ENCODE measurements at regions of chr1 and their contacts with region 1.

Region 1: GRCh38 chr1:161071886-161072371 is 2.2 kb upstream of the ARHGAP30 start:
- DNase-seq: peak; percentile 29
- ATAC-seq: peak; percentile 66
- H3K4me3 ChIP-seq: no peak overlapping the region
- H3K27ac ChIP-seq: no peak overlapping the region
- H3K4me1 ChIP-seq: peaks cover 0 to 46% of the 10 kb centered on the region in 2 experiments; a peak in 2 of 4 replicates
- H3K27me3 ChIP-seq: no peaks in the 10 kb centered on the region
- CTCF ChIP-seq: peak; percentile 57 to 88 (median 70)
- POLR2A ChIP-seq: no peak
- RAD21 ChIP-seq: peak; percentile 90

Region 2: DNA sequence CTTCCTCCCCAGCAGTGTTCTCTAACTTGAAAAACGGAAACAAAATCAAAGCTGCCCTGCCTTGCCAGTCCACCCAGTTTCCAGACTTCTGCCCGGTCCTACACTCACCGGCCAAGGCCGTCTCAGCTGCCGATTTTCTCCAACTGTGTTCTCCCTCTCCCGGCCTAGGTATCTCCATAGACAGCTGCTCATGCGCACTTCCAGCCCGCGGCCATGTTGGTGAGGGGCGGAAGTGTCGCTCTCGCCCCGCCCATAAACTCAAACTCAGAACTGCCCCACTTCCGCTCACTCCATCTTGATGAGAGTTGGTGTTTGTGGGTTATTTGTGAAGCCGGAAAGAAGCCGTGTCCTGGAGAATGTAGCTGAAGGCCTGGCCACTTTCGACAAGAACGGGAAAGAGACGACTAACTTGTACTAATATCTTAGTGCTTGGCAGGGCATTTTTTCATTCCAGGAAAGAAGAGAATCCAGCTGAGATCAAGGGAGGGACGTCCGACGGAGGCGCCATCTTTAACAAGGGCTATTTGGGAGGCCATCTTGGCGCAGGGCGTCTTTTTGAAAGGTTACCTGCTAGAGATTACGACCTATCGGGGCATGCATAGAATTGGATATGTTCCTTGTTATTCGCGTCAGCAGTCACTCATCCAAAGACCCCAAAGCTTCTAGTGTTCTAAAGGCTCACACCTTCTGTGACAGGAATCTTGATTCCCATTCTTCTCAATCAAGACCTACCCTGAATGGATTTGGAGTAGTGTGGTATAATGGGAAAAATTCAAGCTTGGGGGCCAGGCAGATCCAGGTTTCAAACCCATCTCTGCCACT is 26.0 kb before region 1 on chr1 and contains the start of gene USF1:
- CTCF ChIA-PET with region 1: interaction called, 11 read pairs
- POLR2A ChIA-PET with region 1: interaction called, 3 read pairs
- RAD21 ChIA-PET with region 1: no interaction called
- intact Hi-C with region 1: no loop called
- DNase-seq: peak; percentile 90
- ATAC-seq: peak; percentile 81
- H3K4me3 ChIP-seq: peak within 1 kb of the TSS; percentile 66 to 70
- H3K27ac ChIP-seq: peak within 1 kb of the TSS; percentile 85
- H3K4me1 ChIP-seq: peaks cover 5 to 17% of the 10 kb centered on the region in 2 experiments; a peak in 2 of 4 replicates
- H3K27me3 ChIP-seq: no peaks in the 10 kb centered on the region
- CTCF ChIP-seq: no peak
- POLR2A ChIP-seq: no peak
- RAD21 ChIP-seq: no peak
- total RNA-seq, gene USF1: 48.0 TPM

Measured in HCT116 (cell line).